ENCODE measurements at regions of chr5 and their contacts with region 1.

Region 1: GRCh38 chr5:40333459-40334244 is 346.1 kb upstream of the PTGER4 start:
- DNase-seq: peak; percentile 85
- ATAC-seq: peak; percentile 91
- H3K4me3 ChIP-seq: peak overlapping the region; percentile 1; the same call in 1 of the 2 replicates
- H3K27ac ChIP-seq: peak overlapping the region; percentile 79
- H3K4me1 ChIP-seq: peaks cover 20% of the 10 kb centered on the region
- H3K27me3 ChIP-seq: no peaks in the 10 kb centered on the region
- CTCF ChIP-seq: no peak

Region 2: DNA sequence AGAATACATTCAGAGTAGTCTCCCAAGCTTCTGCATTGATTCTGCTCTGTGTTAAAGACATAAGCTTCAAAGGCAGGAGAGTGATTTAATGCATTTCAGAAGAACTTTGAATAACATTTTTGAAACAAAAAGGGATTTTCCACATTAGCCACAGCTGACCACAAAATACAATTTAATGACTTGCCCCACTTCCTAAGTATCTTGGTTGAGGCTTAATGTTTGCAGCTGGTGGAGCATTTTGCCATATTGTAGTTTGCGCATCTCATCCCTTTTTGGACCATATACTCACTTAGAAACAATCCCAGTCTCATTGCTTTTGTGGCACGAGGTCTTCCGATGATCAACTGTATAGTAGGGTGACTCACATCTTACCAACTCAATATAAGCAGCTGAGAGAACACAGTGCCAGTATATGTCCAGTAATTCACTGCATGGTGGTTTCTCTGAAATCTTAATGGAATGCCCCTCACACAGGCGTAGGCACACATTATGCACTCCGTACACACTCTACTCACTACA is 109.7 kb before region 1 on chr5:
- CTCF ChIA-PET with region 1: no interaction called
- POLR2A ChIA-PET with region 1: no interaction called
- intact Hi-C with region 1: loop called (anchors 5 kb)
- DNase-seq: peak; percentile 90
- ATAC-seq: peak; percentile 95
- H3K4me3 ChIP-seq: peak overlapping the region; percentile 38; the same call in 1 of the 2 replicates
- H3K27ac ChIP-seq: peak overlapping the region; percentile 92
- H3K4me1 ChIP-seq: peaks cover 32% of the 10 kb centered on the region
- H3K27me3 ChIP-seq: no peaks in the 10 kb centered on the region
- CTCF ChIP-seq: no peak

Region 3: GRCh38 chr5:40378396-40379177 is 44.9 kb after region 1 on chr5:
- CTCF ChIA-PET with region 1: no interaction called
- POLR2A ChIA-PET with region 1: no interaction called
- intact Hi-C with region 1: loop called (anchors 1 kb)
- DNase-seq: no peak
- ATAC-seq: no peak
- H3K4me3 ChIP-seq: no peak overlapping the region
- H3K27ac ChIP-seq: no peak overlapping the region
- H3K4me1 ChIP-seq: peaks cover 30% of the 10 kb centered on the region
- H3K27me3 ChIP-seq: no peaks in the 10 kb centered on the region
- CTCF ChIP-seq: no peak

Region 4: DNA sequence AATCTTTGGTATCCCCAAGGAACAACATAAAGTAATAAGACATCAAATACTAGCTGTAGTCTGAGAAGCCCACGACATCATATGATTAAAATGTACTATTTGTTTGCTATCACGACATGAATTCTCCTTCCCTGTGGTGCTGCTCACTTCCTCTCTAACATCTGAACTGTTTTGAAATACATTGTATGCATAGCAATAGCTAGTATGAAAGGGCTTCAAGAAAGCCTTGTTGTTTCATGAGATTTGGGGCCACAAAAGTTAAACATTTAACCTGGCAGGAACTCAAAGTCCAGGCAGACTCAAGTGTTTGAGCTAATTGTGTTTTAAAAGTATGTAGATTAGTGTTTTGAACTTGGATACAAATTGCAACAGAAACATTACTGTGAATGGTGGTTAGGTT is 108.7 kb after region 1 on chr5:
- CTCF ChIA-PET with region 1: no interaction called
- POLR2A ChIA-PET with region 1: no interaction called
- intact Hi-C with region 1: no loop called
- DNase-seq: peak; percentile 12
- ATAC-seq: no peak
- H3K4me3 ChIP-seq: no peak overlapping the region
- H3K27ac ChIP-seq: no peak overlapping the region
- H3K4me1 ChIP-seq: peaks cover 19% of the 10 kb centered on the region
- H3K27me3 ChIP-seq: no peaks in the 10 kb centered on the region
- CTCF ChIP-seq: no peak